IMR-90 (cell line): ENCODE measurements at regions of chr3 and their contacts with region 1.

Region 1: DNA sequence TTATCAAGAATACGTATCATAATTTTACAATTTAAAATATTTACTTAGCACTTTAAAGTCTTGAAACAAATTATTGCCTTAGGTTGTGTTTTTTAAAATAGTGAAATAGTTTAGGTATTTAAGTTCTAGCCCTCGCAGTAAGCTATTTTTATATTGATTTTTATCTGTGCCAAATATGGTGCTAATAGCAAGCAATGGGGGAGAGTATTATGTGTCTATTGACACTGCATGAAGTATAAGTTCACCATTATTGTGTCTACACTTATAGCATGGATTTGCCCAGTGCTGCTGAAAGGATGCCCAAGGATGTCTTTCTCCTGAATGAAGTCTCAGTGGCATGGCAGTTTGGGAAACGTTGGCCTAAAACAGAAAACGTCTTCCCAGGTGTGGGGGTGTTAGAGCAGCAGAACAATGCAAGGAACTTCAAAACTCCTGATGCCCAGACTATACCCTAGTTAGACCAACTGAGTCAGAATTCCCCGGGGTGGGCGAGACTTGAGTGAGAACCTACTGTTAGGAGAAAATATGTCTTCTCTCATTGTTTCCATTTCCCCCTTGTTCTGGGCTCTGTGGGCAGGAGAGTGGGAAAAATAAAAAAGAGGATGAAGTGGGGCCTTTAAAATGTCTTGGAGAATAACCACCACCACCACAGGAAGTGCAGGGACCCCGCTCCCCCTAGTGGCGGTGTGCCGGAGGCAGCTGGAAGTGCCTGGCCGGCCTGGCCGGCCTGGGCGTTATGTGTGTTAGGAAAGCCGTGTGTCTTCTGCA is 104.2 kb upstream of the SLC7A14 start:
- DNase-seq: peak; percentile 52
- ATAC-seq: peak; percentile 57
- H3K4me3 ChIP-seq: no peak overlapping the region
- H3K27ac ChIP-seq: peak overlapping the region; percentile 85
- H3K4me1 ChIP-seq: peaks cover 14% of the 10 kb centered on the region
- H3K27me3 ChIP-seq: no peaks in the 10 kb centered on the region
- CTCF ChIP-seq: peak; percentile 65
- POLR2A ChIP-seq: no peak
- RAD21 ChIP-seq: peak; percentile 72

Region 2: GRCh38 chr3:170419557-170420087 is 270.5 kb before region 1 on chr3:
- CTCF ChIA-PET with region 1: no interaction called
- POLR2A ChIA-PET with region 1: no interaction called
- dilution Hi-C with region 1: no loop called
- in situ Hi-C with region 1: loop called (anchors 10 kb)
- intact Hi-C with region 1: loop called (anchors 2 kb)
- DNase-seq: peak; percentile 41
- ATAC-seq: peak; percentile 30
- H3K4me3 ChIP-seq: peak overlapping the region; percentile 85
- H3K27ac ChIP-seq: peak overlapping the region; percentile 84
- H3K4me1 ChIP-seq: peaks cover 6% of the 10 kb centered on the region
- H3K27me3 ChIP-seq: no peaks in the 10 kb centered on the region
- CTCF ChIP-seq: 0 out of 2 replicates have a peak, but pooled peaks have one; percentile 2
- POLR2A ChIP-seq: no peak
- RAD21 ChIP-seq: no peak

Region 3: DNA sequence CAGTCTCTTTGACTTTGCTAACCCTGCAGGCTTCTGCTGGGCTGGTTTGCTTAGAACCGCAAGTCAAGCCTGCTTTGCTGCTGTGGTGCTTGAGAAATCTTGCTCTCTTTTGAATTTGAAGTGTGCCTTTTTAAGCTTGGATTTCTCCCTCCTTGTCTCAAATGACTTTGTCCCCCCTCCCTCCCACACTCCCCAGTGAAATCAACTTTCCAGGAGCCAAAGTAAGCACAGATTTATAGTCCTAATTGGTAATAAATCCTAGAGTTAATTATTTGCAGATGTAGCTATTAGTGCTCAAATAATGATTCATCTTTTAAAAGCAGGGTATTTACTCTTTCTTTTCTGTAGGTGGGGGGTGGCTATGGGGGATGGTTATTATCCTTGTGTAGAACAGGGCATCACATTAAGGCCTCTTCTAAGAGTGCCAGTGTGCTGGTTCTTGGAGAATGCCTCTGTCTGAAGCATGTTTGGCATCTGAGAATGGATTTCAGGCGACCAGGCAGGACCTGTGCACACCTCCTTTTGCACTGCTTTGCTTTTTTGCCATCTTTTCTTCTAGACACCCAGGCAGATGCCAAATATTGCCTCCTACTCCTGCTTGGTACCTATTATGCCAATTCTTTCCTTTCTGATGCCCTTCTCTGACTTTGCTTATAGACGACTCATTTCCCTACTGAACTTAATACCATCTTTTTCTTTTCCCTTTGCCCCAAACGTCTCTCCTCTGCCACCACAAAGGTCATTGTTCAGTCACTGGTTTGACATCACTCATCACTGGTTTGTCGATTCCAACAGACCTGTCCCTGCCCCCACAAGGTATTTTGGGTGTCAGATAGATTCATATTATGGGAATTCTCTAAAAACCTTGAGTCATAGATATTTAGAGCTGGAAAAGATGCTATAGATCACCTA is 220.7 kb before region 1 on chr3:
- CTCF ChIA-PET with region 1: no interaction called
- POLR2A ChIA-PET with region 1: no interaction called
- dilution Hi-C with region 1: no loop called
- in situ Hi-C with region 1: no loop called
- intact Hi-C with region 1: loop called (anchors 1 kb)
- DNase-seq: peak; percentile 83
- ATAC-seq: peak; percentile 47
- H3K4me3 ChIP-seq: no peak overlapping the region
- H3K27ac ChIP-seq: peak overlapping the region; percentile 83; the same call in 1 of the 2 replicates
- H3K4me1 ChIP-seq: peaks cover 33% of the 10 kb centered on the region
- H3K27me3 ChIP-seq: no peaks in the 10 kb centered on the region
- CTCF ChIP-seq: no peak
- POLR2A ChIP-seq: no peak
- RAD21 ChIP-seq: no peak

Region 4: DNA sequence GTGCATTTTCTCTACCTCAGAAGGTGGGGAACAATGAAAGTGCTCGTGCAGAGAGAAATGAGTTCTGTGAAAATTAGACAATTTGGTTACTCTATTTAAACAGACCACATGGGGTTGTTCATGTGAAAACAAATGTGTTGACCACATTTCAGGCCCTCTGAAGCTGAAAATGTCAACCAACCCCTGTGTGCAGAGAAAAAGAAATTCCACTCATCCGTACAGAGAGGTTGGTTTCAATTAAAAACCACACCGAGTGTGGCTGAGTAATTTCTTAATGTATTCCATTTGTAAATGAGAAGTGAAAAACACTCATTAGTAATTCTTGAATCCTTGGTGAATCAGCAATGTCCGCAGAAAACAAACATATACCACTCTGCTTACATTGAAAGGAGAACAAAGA is 57.3 kb before region 1 on chr3:
- CTCF ChIA-PET with region 1: no interaction called
- POLR2A ChIA-PET with region 1: no interaction called
- dilution Hi-C with region 1: no loop called
- in situ Hi-C with region 1: no loop called
- intact Hi-C with region 1: no loop called
- DNase-seq: no peak
- ATAC-seq: no peak
- H3K4me3 ChIP-seq: no peak overlapping the region
- H3K27ac ChIP-seq: no peak overlapping the region
- H3K4me1 ChIP-seq: no peaks in the 10 kb centered on the region
- H3K27me3 ChIP-seq: peaks cover 3% of the 10 kb centered on the region; the same call in 1 of the 2 replicates
- CTCF ChIP-seq: no peak
- POLR2A ChIP-seq: no peak
- RAD21 ChIP-seq: no peak

Region 5: GRCh38 chr3:170679190-170679589 is 10.9 kb before region 1 on chr3:
- CTCF ChIA-PET with region 1: no interaction called
- POLR2A ChIA-PET with region 1: no interaction called
- dilution Hi-C with region 1: no loop called
- in situ Hi-C with region 1: no loop called
- intact Hi-C with region 1: no loop called
- DNase-seq: no peak
- ATAC-seq: peak; percentile 40; the same call in 1 of the 2 replicates
- H3K4me3 ChIP-seq: no peak overlapping the region
- H3K27ac ChIP-seq: no peak overlapping the region
- H3K4me1 ChIP-seq: no peaks in the 10 kb centered on the region
- H3K27me3 ChIP-seq: no peaks in the 10 kb centered on the region
- CTCF ChIP-seq: no peak
- POLR2A ChIP-seq: no peak
- RAD21 ChIP-seq: no peak

Region 6: GRCh38 chr3:171284308-171285075 is 594.4 kb after region 1 on chr3:
- CTCF ChIA-PET with region 1: no interaction called
- POLR2A ChIA-PET with region 1: no interaction called
- dilution Hi-C with region 1: no loop called
- in situ Hi-C with region 1: no loop called
- intact Hi-C with region 1: no loop called
- DNase-seq: peak; percentile 98
- ATAC-seq: peak; percentile 95
- H3K4me3 ChIP-seq: no peak overlapping the region
- H3K27ac ChIP-seq: peak overlapping the region; percentile 13; the same call in 1 of the 2 replicates
- H3K4me1 ChIP-seq: peaks cover 9% of the 10 kb centered on the region
- H3K27me3 ChIP-seq: no peaks in the 10 kb centered on the region
- CTCF ChIP-seq: no peak
- POLR2A ChIP-seq: no peak
- RAD21 ChIP-seq: no peak